Lower lobe of right lung (tissue), 2 donors: ENCODE measurements at regions of chr6 and their contacts with region 1.

Region 1: GRCh38 chr6:153023977-153024708 is 21.6 kb upstream of the MTRF1L start:
- DNase-seq: no peak
- ATAC-seq: peak; percentile 83 to 89
- H3K4me3 ChIP-seq: no peak overlapping the region
- H3K27ac ChIP-seq: no peak overlapping the region
- H3K4me1 ChIP-seq: no peaks in the 10 kb centered on the region
- H3K27me3 ChIP-seq: no peaks in the 10 kb centered on the region
- CTCF ChIP-seq: peak; percentile 82

Region 2: DNA sequence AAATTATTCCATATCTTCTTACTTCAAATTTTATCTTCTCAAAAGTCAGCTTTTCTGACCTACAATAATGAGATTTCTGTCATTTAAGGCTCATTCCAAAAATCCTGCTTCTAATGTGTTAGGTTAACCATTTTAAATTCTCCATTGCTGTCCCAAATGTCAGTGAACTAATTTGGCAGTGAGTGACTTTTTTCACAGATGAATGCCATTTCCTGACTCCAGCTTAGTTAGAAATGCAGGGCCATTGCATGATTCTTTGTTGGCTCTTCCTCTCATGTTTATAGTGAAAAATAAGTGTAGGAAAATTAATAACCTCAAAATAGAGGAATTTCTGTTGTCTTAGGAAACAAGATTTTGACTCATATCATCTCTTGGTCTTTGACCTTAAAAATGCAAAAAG is 229.4 kb before region 1 on chr6:
- intact Hi-C with region 1: no loop called
- DNase-seq: no peak
- ATAC-seq: no peak
- H3K4me3 ChIP-seq: no peak overlapping the region
- H3K27ac ChIP-seq: no peak overlapping the region
- H3K4me1 ChIP-seq: no peaks in the 10 kb centered on the region
- H3K27me3 ChIP-seq: no peaks in the 10 kb centered on the region
- CTCF ChIP-seq: no peak

Region 3: GRCh38 chr6:152863618-152864326 is 160.4 kb before region 1 on chr6:
- intact Hi-C with region 1: loop called (anchors 10 kb)
- DNase-seq: no peak
- ATAC-seq: peak; percentile 70 to 82
- H3K4me3 ChIP-seq: no peak overlapping the region
- H3K27ac ChIP-seq: no peak overlapping the region
- H3K4me1 ChIP-seq: no peaks in the 10 kb centered on the region
- H3K27me3 ChIP-seq: peaks cover 3% of the 10 kb centered on the region
- CTCF ChIP-seq: peak; percentile 67

Region 4: GRCh38 chr6:152932865-152933264 is 91.3 kb before region 1 on chr6:
- intact Hi-C with region 1: no loop called
- DNase-seq: no peak
- ATAC-seq: no peak
- H3K4me3 ChIP-seq: no peak overlapping the region
- H3K27ac ChIP-seq: no peak overlapping the region
- H3K4me1 ChIP-seq: no peaks in the 10 kb centered on the region
- H3K27me3 ChIP-seq: peaks cover under 1% of the 10 kb centered on the region
- CTCF ChIP-seq: no peak

Region 5: GRCh38 chr6:153059761-153060160 is 35.6 kb after region 1 on chr6:
- intact Hi-C with region 1: no loop called
- DNase-seq: no peak
- ATAC-seq: no peak
- H3K4me3 ChIP-seq: no peak overlapping the region
- H3K27ac ChIP-seq: no peak overlapping the region
- H3K4me1 ChIP-seq: no peaks in the 10 kb centered on the region
- H3K27me3 ChIP-seq: no peaks in the 10 kb centered on the region
- CTCF ChIP-seq: no peak

Region 6: GRCh38 chr6:153263489-153263888 is 239.3 kb after region 1 on chr6:
- intact Hi-C with region 1: no loop called
- DNase-seq: no peak
- ATAC-seq: no peak
- H3K4me3 ChIP-seq: no peak overlapping the region
- H3K27ac ChIP-seq: no peak overlapping the region
- H3K4me1 ChIP-seq: no peaks in the 10 kb centered on the region
- H3K27me3 ChIP-seq: no peaks in the 10 kb centered on the region
- CTCF ChIP-seq: no peak